ENCODE measurements at regions of chr17 and their contacts with region 1.

Region 1: GRCh38 chr17:12180644-12181261 is 160.1 kb downstream of the MAP2K4 start:
- DNase-seq: peak; percentile 25 to 34
- H3K4me3 ChIP-seq: no peak overlapping the region
- H3K27ac ChIP-seq: no peak overlapping the region
- H3K4me1 ChIP-seq: no peaks in the 10 kb centered on the region
- H3K27me3 ChIP-seq: no peaks in the 10 kb centered on the region
- CTCF ChIP-seq: peak; percentile 77

Region 2: DNA sequence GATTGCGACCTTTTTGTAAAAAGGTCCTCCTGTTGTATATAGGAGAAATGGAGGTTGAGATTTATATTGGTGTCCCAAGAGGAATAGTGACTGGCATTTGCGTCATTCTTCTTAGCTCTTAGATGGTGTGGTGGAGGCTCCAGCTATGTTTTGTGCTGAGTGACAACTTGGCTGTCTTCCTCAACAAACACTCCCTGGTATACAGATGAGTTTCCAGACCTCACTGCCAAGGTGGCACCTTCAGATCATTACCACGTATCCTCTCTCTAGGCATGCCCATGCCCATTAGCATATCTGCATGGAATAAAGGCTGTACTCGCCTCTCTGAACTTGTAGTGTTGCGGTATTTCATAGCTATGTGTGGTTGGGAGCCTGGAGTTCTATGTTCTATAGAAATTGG is 40.1 kb before region 1 on chr17:
- CTCF ChIA-PET with region 1: no interaction called
- POLR2A ChIA-PET with region 1: no interaction called
- intact Hi-C with region 1: no loop called
- DNase-seq: no peak
- H3K4me3 ChIP-seq: no peak overlapping the region
- H3K27ac ChIP-seq: no peak overlapping the region
- H3K4me1 ChIP-seq: no peaks in the 10 kb centered on the region
- H3K27me3 ChIP-seq: no peaks in the 10 kb centered on the region
- CTCF ChIP-seq: no peak

Region 3: GRCh38 chr17:12342609-12343435 is 162.1 kb after region 1 on chr17:
- CTCF ChIA-PET with region 1: no interaction called
- POLR2A ChIA-PET with region 1: no interaction called
- intact Hi-C with region 1: no loop called
- DNase-seq: no peak
- H3K4me3 ChIP-seq: no peak overlapping the region
- H3K27ac ChIP-seq: no peak overlapping the region
- H3K4me1 ChIP-seq: no peaks in the 10 kb centered on the region
- H3K27me3 ChIP-seq: no peaks in the 10 kb centered on the region
- CTCF ChIP-seq: peak; percentile 28; the same call in 1 of the 2 replicates

Region 4: GRCh38 chr17:12667299-12667958 is 486.7 kb after region 1 on chr17:
- CTCF ChIA-PET with region 1: no interaction called
- POLR2A ChIA-PET with region 1: no interaction called
- intact Hi-C with region 1: loop called (anchors 5 kb)
- DNase-seq: no peak
- H3K4me3 ChIP-seq: no peak overlapping the region
- H3K27ac ChIP-seq: no peak overlapping the region
- H3K4me1 ChIP-seq: no peaks in the 10 kb centered on the region
- H3K27me3 ChIP-seq: peaks cover 9% of the 10 kb centered on the region
- CTCF ChIP-seq: peak; percentile 18; the same call in 1 of the 2 replicates

Measured in PC-9 (cell line).